CD4-positive, alpha-beta memory T cell (primary cell): ENCODE measurements at regions of chr4 and their contacts with region 1.

Region 1: GRCh38 chr4:102344954-102345794 is at the start of gene SLC39A8:
- DNase-seq: peak; percentile 86 to 95 (median 89)
- H3K4me3 ChIP-seq: peak within 1 kb of the TSS; percentile 80 to 83
- H3K4me3 Mint-ChIP-seq: peak within 1 kb of the TSS; percentile 86 to 95 (median 94)
- H3K27ac ChIP-seq: peak within 1 kb of the TSS; percentile 91
- H3K27ac Mint-ChIP-seq: peak within 1 kb of the TSS; percentile 86 to 99 (median 98)
- H3K4me1 ChIP-seq: peaks cover 47% of the 10 kb centered on the region
- H3K4me1 Mint-ChIP-seq: peaks cover 24 to 56% (median 42%) of the 10 kb centered on the region in 4 donors
- H3K27me3 ChIP-seq: no peaks in the 10 kb centered on the region
- H3K27me3 Mint-ChIP-seq: no peaks in the 10 kb centered on the region
- total RNA-seq, gene SLC39A8: 24.6 to 25.7 TPM

Region 2: GRCh38 chr4:102760645-102761295 is 415.6 kb after region 1 on chr4 and contains the start of gene MANBA:
- CTCF ChIA-PET with region 1: no interaction called
- POLR2A ChIA-PET with region 1: interaction called, 11 read pairs
- intact Hi-C with region 1: loop called (anchors 2 kb)
- DNase-seq: peak; percentile 78 to 84 (median 79)
- H3K4me3 ChIP-seq: peak within 1 kb of the TSS; percentile 77 to 89
- H3K4me3 Mint-ChIP-seq: peak within 1 kb of the TSS; percentile 92 to 99 (median 98)
- H3K27ac ChIP-seq: peak within 1 kb of the TSS; percentile 65
- H3K27ac Mint-ChIP-seq: peak within 1 kb of the TSS; percentile 75 to 96 (median 94)
- H3K4me1 ChIP-seq: peaks cover 18% of the 10 kb centered on the region
- H3K4me1 Mint-ChIP-seq: peaks cover 24 to 47% (median 36%) of the 10 kb centered on the region in 4 donors
- H3K27me3 ChIP-seq: no peaks in the 10 kb centered on the region
- H3K27me3 Mint-ChIP-seq: peaks cover 0 to 3% of the 10 kb centered on the region in 2 donors
- total RNA-seq, gene MANBA: 30.0 to 33.2 TPM

Region 3: GRCh38 chr4:103008875-103009729 is 663.9 kb after region 1 on chr4:
- CTCF ChIA-PET with region 1: interaction called, 9 read pairs
- POLR2A ChIA-PET with region 1: interaction called, 3 read pairs
- intact Hi-C with region 1: loop called (anchors 5 kb)
- DNase-seq: peak; percentile 35 to 61 (median 59)
- H3K4me3 ChIP-seq: no peak overlapping the region
- H3K4me3 Mint-ChIP-seq: no peak overlapping the region
- H3K27ac ChIP-seq: no peak overlapping the region
- H3K27ac Mint-ChIP-seq: no peak overlapping the region
- H3K4me1 ChIP-seq: no peaks in the 10 kb centered on the region
- H3K4me1 Mint-ChIP-seq: peaks cover 0 to 2% (median 1%) of the 10 kb centered on the region in 4 donors
- H3K27me3 ChIP-seq: no peaks in the 10 kb centered on the region
- H3K27me3 Mint-ChIP-seq: peaks cover 0 to 1% of the 10 kb centered on the region in 2 donors

Region 4: GRCh38 chr4:103075901-103076739 is 730.9 kb after region 1 on chr4:
- CTCF ChIA-PET with region 1: no interaction called
- POLR2A ChIA-PET with region 1: interaction called, 7 read pairs
- intact Hi-C with region 1: loop called (anchors 2 kb)
- DNase-seq: peak; percentile 72 to 79 (median 76)
- H3K4me3 ChIP-seq: peak overlapping the region; percentile 26 to 72
- H3K4me3 Mint-ChIP-seq: peak overlapping the region; percentile 94 to 98 (median 98)
- H3K27ac ChIP-seq: peak overlapping the region; percentile 78
- H3K27ac Mint-ChIP-seq: peak overlapping the region; percentile 98 to 99 (median 99)
- H3K4me1 ChIP-seq: peaks cover 37% of the 10 kb centered on the region
- H3K4me1 Mint-ChIP-seq: peaks cover 24 to 58% (median 38%) of the 10 kb centered on the region in 4 donors
- H3K27me3 ChIP-seq: no peaks in the 10 kb centered on the region
- H3K27me3 Mint-ChIP-seq: no peaks in the 10 kb centered on the region

Region 5: GRCh38 chr4:103198111-103198765 is 853.1 kb after region 1 on chr4 and contains the start of gene CENPE:
- CTCF ChIA-PET with region 1: no interaction called
- POLR2A ChIA-PET with region 1: no interaction called
- intact Hi-C with region 1: loop called (anchors 10 kb)
- DNase-seq: peak; percentile 82 to 90 (median 87)
- H3K4me3 ChIP-seq: peak within 1 kb of the TSS; percentile 67 to 75
- H3K4me3 Mint-ChIP-seq: peak within 1 kb of the TSS; percentile 92 to 100 (median 96)
- H3K27ac ChIP-seq: peak within 1 kb of the TSS; percentile 88
- H3K27ac Mint-ChIP-seq: peak within 1 kb of the TSS; percentile 87 to 100 (median 99)
- H3K4me1 ChIP-seq: peaks cover 10% of the 10 kb centered on the region
- H3K4me1 Mint-ChIP-seq: peaks cover 9 to 18% (median 13%) of the 10 kb centered on the region in 4 donors
- H3K27me3 ChIP-seq: no peaks in the 10 kb centered on the region
- H3K27me3 Mint-ChIP-seq: peaks cover 0 to 5% of the 10 kb centered on the region in 2 donors
- total RNA-seq, gene CENPE: 0.67 to 1.5 TPM